Posterior vena cava (tissue), 2 donors: ENCODE measurements at regions of chr7 and their contacts with region 1.

Region 1: GRCh38 chr7:44973610-44974401 is 5.0 kb downstream of the MYO1G start:
- DNase-seq: peak; percentile 88

Region 2: DNA sequence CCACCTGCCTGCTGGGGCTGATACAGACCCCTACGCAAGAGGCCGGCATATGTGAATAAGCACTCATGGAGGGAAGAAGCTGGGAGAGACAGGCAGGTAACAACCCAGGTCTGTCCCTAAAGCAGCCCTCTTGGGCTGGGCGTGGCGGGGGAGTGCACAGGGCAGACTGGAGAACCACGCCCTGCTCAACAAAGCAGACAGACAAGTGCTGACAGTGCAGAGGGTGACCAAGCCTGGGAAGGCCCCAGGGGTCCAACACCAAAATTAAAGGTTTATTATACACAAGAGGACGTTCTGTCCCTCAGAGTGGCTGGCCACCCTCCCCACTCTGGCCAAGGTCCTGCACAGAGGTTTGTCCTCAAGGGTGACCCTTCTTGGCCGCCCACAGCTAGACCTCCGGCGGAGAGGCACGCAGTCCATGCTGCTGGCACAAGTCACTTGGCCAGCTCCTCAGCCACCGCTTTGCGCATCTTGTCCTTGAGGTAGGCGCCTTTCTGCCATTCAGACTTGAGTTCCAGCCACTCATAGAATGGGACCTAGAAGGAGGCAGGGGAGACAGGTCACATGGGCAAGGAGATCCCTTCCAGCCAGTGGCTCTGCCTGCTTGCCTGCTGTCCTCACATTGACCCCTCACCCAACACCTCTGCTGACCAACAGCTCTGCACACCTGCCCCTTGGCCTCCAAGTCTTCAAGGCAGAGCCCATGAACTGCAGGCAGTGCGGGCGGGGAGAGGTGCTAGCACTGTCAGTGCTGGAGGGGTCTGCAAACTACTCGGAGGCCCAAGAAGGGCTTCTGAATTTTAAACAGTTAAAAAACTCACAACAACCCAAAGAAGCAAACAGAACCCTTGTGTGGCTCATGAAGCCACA is 126.3 kb after region 1 on chr7:
- intact Hi-C with region 1: loop called in 1 of 2 experiments (anchors 10 kb)
- DNase-seq: peak; percentile 62